Dendritic cell treated with granulocyte-macrophage colony-stimulating factor and Interleukin-4, amounts not matched to agents 40 ng/mL and 50 ng/mL, for 4 days (primary cell): ENCODE measurements at regions of chr12 and their contacts with region 1.

Region 1: DNA sequence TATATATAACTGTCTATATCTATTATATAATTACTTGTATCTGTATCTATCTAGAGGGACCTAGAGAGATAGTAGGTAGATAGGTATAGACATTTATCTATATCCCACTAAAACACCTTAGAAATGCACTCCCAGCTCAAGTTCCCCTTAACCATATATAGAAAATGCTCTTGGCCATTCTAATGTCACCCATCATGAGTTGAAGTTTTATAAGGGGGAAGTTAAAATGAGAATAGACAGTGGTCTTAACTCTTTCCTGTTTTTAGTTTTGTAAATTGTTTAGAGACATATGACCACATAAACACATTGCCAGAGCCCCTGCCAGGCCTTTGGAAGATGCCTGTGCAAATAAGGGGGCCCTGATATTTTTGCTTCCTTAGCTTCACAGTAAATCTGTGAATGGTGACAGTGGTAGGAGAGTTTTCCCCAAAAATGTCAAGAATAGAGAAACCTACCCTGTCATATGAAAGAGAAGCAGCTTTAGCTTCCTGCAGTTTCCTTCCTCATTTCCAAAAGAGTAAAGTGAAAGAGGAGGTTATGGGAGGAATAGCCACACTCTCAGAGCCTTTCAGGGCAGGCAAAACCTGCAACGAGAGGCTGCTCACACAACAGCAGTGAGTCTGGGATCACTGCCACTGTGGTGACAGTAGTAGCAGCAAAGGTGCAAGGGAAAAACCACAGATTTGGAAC is 45.5 kb downstream of the MGST1 start:
- H3K4me3 Mint-ChIP-seq: no peak overlapping the region
- H3K27ac Mint-ChIP-seq: peak overlapping the region; percentile 45
- H3K4me1 Mint-ChIP-seq: peaks cover 20% of the 10 kb centered on the region
- H3K27me3 Mint-ChIP-seq: no peaks in the 10 kb centered on the region

Region 2: DNA sequence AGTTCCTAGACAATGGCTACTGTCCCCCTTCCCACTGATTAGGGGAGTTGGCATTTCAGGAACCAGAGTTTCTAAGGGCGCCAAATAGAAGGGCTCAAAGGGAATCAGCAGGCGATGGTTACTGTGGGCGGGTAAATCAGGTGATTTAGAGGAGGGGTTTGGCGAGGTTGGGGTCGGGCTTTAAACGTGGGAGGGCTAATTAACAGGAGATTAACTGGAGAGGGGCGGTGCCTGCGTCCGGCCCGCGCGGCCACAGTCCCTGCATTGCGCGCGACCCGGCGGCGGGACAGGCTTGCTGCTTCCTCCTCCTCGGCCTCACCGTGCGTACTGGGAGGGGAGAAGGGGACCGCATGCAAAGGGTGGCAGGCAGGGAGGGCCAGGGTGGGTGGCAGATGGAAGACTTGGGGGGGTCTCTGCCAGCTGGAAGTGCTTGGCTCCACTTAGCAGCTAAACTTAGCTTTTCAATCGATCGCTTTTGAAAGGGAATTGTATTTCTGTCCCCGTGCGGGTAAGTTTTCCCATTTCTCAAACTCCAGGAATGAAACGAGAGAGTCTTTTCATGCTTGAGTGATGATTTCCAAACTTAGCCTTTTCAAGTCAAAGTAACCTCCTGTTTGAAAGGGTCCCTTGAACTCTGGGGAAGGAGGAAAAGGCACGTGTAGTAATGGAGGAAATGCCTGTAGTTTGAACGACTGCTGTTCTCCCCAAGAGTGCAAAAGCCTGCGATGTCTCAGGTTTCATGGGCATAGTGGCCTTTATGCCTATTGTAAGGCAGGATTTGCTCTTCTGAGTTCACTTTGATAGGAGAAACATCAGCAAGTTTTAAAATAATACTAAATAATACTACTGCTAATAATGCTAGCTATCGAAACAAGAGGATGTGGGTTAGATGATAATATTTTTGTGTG is 45.3 kb before region 1 on chr12 and contains the start of gene MGST1:
- intact Hi-C with region 1: loop called (anchors 1 kb)
- H3K4me3 Mint-ChIP-seq: peak within 1 kb of the TSS; percentile 74
- H3K27ac Mint-ChIP-seq: peak within 1 kb of the TSS; percentile 85
- H3K4me1 Mint-ChIP-seq: peaks cover 48% of the 10 kb centered on the region
- H3K27me3 Mint-ChIP-seq: no peaks in the 10 kb centered on the region

Region 3: GRCh38 chr12:16531621-16532020 is 138.6 kb after region 1 on chr12:
- intact Hi-C with region 1: no loop called
- H3K4me3 Mint-ChIP-seq: no peak overlapping the region
- H3K27ac Mint-ChIP-seq: no peak overlapping the region
- H3K4me1 Mint-ChIP-seq: no peaks in the 10 kb centered on the region
- H3K27me3 Mint-ChIP-seq: no peaks in the 10 kb centered on the region